Activated T-helper 2 cell treated with anti-CD3 and anti-CD28 coated beads, Interferon-gamma antibody, Interleukin-2, Interleukin-4, amounts not matched to agents 10 μg/mL and 5 μg/mL and 100 μg/mL, durations not matched to agents 14 hours and 24 hours and 36 hours (primary cell): ENCODE measurements at regions of chr7 and their contacts with region 1.

Region 1: GRCh38 chr7:108569381-108570145 is at the starts of genes DNAJB9 and THAP5:
- DNase-seq: peak; percentile 100
- H3K4me3 Mint-ChIP-seq: peak within 1 kb of the TSS; percentile 99
- H3K27ac Mint-ChIP-seq: peak within 1 kb of the TSS; percentile 99
- H3K4me1 Mint-ChIP-seq: peaks cover 39% of the 10 kb centered on the region
- H3K27me3 Mint-ChIP-seq: no peaks in the 10 kb centered on the region
- total RNA-seq, gene DNAJB9: 19.4 and 19.9 TPM in 2 replicates
- total RNA-seq, gene THAP5: 33.8 and 35.4 TPM in 2 replicates

Region 2: GRCh38 chr7:108525985-108526767 is 43.4 kb before region 1 on chr7 and contains the start of gene PNPLA8:
- intact Hi-C with region 1: loop called (anchors 1 kb)
- DNase-seq: peak; percentile 100
- H3K4me3 Mint-ChIP-seq: peak within 1 kb of the TSS; percentile 89
- H3K27ac Mint-ChIP-seq: peak within 1 kb of the TSS; percentile 98
- H3K4me1 Mint-ChIP-seq: peaks cover 39% of the 10 kb centered on the region
- H3K27me3 Mint-ChIP-seq: peaks cover 4% of the 10 kb centered on the region
- total RNA-seq, gene PNPLA8: 21.5 and 22.4 TPM in 2 replicates

Region 3: DNA sequence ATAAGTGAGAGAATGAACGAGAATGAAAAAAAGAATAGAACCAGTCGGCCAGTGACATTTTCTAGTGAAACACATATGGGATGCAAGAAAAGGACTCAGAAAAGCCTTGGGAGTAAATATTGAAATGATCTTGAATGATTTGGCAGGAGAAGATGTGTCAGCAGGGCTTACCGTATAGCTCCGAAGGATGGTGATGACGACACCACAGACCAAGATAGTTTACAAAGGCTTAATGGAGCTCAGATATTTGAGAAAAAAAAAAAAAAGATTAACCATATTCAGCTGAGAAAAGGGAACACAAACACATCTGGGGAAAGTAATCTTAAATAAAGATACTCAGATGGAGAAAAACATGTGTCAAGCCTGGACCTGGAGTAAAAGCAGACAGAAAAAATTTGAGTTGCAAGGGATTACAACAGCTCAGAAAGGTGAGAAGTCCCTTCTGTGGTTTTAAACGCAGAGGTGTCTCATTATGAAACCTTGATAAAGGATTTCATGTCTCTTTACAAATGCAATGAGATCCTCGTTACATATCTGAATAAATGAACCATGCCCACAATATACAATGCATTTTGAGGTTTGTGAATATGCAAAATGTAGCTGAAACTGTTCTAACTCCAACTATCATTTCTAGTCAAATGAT is 36.1 kb after region 1 on chr7:
- intact Hi-C with region 1: loop called (anchors 5 kb)
- DNase-seq: no peak
- H3K4me3 Mint-ChIP-seq: no peak overlapping the region
- H3K27ac Mint-ChIP-seq: peak overlapping the region; percentile 39
- H3K4me1 Mint-ChIP-seq: peaks cover 19% of the 10 kb centered on the region
- H3K27me3 Mint-ChIP-seq: no peaks in the 10 kb centered on the region